ENCODE measurements at regions of chr5 and their contacts with region 1.

Region 1: DNA sequence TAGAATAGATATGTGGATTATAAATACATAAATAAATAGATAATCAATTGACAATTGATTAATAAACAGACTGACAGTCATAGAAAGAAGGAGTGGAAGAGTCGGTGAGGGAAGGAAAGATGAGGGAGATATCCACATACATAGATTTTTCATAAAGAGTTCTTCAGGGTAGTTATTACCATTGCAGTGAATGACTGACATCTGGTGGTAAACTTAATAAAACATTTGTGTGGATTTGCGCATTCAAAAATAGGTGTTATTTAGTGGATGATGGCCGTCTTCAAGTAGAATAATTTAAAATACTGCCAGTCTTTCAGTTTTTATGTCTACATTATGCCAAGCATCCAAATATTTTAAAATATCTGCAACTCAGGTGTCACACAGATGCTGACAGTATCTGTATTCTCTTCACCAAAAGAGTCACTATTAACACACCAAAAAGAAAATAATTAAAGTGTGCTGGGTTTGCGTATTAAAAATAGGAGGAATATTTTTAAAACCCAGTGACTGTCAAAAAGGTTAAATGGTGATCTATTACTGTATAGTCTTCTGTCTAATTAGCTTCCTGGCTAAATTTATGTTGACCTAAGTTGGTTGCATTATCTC is 78.8 kb downstream of the GIN1 start:
- DNase-seq: no peak
- H3K4me3 ChIP-seq: no peak overlapping the region
- H3K27ac ChIP-seq: no peak overlapping the region
- H3K4me1 ChIP-seq: no peaks in the 10 kb centered on the region
- H3K27me3 ChIP-seq: no peaks in the 10 kb centered on the region
- CTCF ChIP-seq: peak in 3 of 4 experiments; percentile 43 to 62 (median 53)
- POLR2A ChIP-seq: no peak

Region 2: DNA sequence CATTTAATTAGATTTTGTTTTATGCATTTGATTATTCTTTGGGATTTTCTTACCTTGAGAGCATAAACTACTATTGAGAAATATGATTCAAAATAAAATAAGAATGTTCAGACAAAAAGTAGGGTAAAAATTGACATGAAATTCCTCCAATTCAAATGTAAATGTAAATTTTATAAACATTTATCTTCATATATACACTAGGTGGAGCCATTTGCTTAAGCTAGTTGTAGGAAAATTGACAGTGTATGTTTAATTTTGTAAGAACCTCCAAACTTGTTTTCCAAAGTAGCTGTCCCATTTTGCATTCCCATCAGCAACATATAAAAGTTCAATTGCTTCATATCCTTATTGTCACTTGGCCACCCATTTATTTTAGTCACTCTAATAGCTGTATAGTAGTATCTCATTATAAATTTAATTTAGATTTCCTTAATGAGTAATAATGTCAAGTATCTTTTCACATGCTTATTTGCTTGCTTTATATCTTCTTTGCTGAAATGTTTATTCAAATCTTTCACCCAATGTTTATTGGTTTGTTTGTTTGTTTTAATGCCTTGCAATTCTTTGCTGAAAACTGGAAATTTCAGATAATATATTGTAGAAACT is 504.7 kb before region 1 on chr5:
- intact Hi-C with region 1: loop called (anchors 5 kb)
- DNase-seq: no peak
- H3K4me3 ChIP-seq: no peak overlapping the region
- H3K27ac ChIP-seq: no peak overlapping the region
- H3K4me1 ChIP-seq: no peaks in the 10 kb centered on the region
- H3K27me3 ChIP-seq: no peaks in the 10 kb centered on the region
- CTCF ChIP-seq: peak in 2 of 4 experiments; percentile 19
- POLR2A ChIP-seq: no peak

Region 3: GRCh38 chr5:102832445-102832844 is 208.7 kb before region 1 on chr5:
- intact Hi-C with region 1: no loop called
- DNase-seq: no peak
- H3K4me3 ChIP-seq: no peak overlapping the region
- H3K27ac ChIP-seq: no peak overlapping the region
- H3K4me1 ChIP-seq: no peaks in the 10 kb centered on the region
- H3K27me3 ChIP-seq: no peaks in the 10 kb centered on the region
- CTCF ChIP-seq: no peak
- POLR2A ChIP-seq: no peak